ENCODE measurements at regions of chr5 and their contacts with region 1.

Region 1: GRCh38 chr5:150461231-150461630 is 11.7 kb upstream of the RPS14 start:
- DNase-seq: peak; percentile 90
- H3K4me3 ChIP-seq: peak overlapping the region in 1 of 8 donors; percentile 3
- H3K27ac ChIP-seq: peak overlapping the region in 7 of 8 donors; percentile 34 to 82 (median 73)
- H3K4me1 ChIP-seq: peaks cover 7 to 99% (median 71%) of the 10 kb centered on the region in 6 donors
- H3K27me3 ChIP-seq: no peaks in the 10 kb centered on the region
- CTCF ChIP-seq: no peak
- POLR2A ChIP-seq: no peak

Region 2: GRCh38 chr5:150517272-150518152 is 56.3 kb after region 1 on chr5:
- intact Hi-C with region 1: loop called (anchors 10 kb)
- DNase-seq: no peak
- H3K4me3 ChIP-seq: no peak overlapping the region
- H3K27ac ChIP-seq: peak overlapping the region in 7 of 8 donors; percentile 32 to 81 (median 74)
- H3K4me1 ChIP-seq: peaks cover 17 to 100% (median 79%) of the 10 kb centered on the region in 6 donors
- H3K27me3 ChIP-seq: no peaks in the 10 kb centered on the region
- CTCF ChIP-seq: no peak
- POLR2A ChIP-seq: no peak

Measured in spleen (tissue), 13 donors.